Naive thymus-derived CD8-positive, alpha-beta T cell (primary cell): ENCODE measurements at regions of chr4 and their contacts with region 1.

Region 1: DNA sequence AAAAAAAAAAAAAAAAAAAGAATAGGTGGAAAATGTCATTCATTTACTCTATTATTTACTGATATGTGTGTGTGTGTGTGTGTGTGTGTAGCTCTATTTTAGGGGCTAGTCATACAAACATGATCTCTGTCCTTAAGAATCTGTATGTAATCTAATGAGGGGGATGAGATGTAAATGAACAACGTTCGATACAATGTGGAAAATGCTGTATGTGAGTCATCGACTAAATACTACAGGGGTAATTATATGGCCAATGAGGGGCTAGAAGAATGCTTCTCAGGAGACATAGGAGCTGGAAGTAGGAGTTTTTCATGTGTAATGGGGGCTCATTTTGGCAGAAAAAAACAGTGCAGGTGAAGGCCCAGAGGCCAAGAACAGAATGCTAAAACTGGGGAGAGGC is 41.9 kb downstream of the LEF1 start:
- DNase-seq: no peak
- ATAC-seq: peak in 1 of 2 donors; percentile 38
- H3K4me3 Mint-ChIP-seq: peak overlapping the region; percentile 9 to 84 (median 58)
- H3K27ac Mint-ChIP-seq: peak overlapping the region; percentile 70 to 95 (median 88)
- H3K4me1 Mint-ChIP-seq: peaks cover 37 to 84% (median 75%) of the 10 kb centered on the region in 4 donors
- H3K27me3 Mint-ChIP-seq: no peaks in the 10 kb centered on the region

Region 2: DNA sequence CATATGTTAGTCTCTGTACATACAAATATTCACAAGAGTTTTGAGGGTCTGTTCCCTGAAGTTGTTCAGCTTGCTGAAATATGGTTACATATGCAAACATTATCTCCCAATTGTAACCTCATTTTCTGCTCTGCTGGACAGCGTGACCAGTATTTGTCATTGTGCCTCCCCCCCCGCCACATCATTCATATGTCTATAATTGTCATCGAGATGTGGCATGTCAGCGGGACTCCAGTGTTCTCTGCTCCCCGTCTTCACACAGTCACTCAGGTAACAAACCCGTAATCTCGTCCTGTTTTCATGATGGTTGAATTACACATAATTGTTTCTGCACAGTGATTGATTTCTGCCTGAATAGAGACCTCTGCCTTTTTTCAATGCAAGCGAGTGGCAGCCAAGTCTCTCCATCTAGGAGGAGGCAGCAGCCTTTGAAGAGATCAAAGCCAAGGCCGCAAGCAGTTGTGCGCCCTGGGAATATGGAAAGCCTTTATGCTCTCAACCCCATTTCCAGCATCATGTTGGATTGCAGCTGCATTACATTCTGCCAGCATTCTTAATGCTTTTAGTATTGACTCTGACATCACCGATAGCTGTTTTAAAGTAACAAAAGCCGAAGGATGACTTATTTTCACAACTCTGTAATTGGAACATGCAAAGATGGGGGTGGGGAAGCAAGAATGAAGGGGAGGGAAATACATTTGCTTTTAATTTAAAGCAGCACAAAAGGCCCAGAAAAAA is 14.6 kb after region 1 on chr4:
- POLR2A ChIA-PET with region 1: interaction called, 13 read pairs
- DNase-seq: peak in 1 of 10 donors; percentile 46
- ATAC-seq: peak in 1 of 2 donors; percentile 3
- H3K4me3 Mint-ChIP-seq: peak overlapping the region; percentile 68 to 90 (median 81)
- H3K27ac Mint-ChIP-seq: peak overlapping the region; percentile 90 to 97 (median 94)
- H3K4me1 Mint-ChIP-seq: peaks cover 50 to 94% (median 90%) of the 10 kb centered on the region in 4 donors
- H3K27me3 Mint-ChIP-seq: no peaks in the 10 kb centered on the region